Pancreas (tissue), 10 donors: ENCODE measurements at regions of chr10 and their contacts with region 1.

Region 1: DNA sequence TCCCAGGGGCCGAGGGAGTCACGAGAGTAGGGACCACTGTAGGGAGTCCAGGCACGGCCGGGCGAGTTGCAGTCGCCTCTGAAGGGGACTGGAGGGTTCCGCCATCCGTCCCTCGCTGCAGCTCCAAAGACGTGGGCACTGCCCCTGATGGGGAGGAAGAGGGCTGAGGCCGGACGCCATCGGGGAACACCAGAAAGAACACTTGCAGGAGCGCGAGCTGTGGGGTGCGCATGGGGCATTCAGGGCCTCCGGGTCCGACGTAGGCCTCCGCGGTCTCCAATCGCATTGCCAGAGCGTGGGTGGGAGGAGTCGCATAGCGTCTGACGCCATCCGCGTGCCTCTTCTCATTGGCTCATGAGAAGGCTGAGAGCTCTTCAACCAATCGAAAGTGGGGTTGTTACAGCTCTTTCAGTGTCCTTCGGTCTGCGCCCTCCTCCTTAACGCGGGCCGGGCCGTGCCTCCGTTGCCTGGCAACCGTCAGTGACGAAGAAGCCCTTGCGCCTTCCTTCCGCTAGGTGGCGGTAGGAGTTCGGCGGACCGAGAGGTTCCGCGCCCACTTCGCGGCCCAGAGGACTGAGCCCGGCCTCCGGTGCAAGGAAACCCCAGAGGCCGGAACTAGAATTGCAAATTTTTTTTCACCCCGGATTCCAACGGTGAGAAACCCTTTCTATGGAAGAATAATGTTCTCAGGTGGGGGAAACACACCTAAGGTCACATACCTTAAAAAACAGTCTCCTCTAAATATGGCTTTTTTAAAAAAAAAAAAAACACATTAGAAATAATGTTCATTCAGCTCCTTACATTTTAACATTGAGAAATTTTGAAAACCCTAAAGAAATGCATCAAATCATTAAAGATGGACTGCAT is at the start of gene TCTN3:
- DNase-seq: peak; percentile 95 to 99 (median 98)
- ATAC-seq: peak; percentile 99 to 100 (median 100)
- H3K4me3 ChIP-seq: peak within 1 kb of the TSS; percentile 69 to 77 (median 72)
- H3K27ac ChIP-seq: peak within 1 kb of the TSS; percentile 34 to 79 (median 47)
- H3K4me1 ChIP-seq: peaks cover 0 to 15% (median 0%) of the 10 kb centered on the region in 3 donors
- H3K27me3 ChIP-seq: no peaks in the 10 kb centered on the region
- CTCF ChIP-seq: peak; percentile 98 to 99 (median 99)
- total RNA-seq, gene TCTN3: 8.9 to 25.5 (median 16.7) TPM

Region 2: GRCh38 chr10:95605163-95605562 is 88.7 kb before region 1 on chr10:
- intact Hi-C with region 1: no loop called
- DNase-seq: no peak
- ATAC-seq: no peak
- H3K4me3 ChIP-seq: no peak overlapping the region
- H3K27ac ChIP-seq: no peak overlapping the region
- H3K4me1 ChIP-seq: no peaks in the 10 kb centered on the region
- H3K27me3 ChIP-seq: no peaks in the 10 kb centered on the region
- CTCF ChIP-seq: no peak

Region 3: GRCh38 chr10:95832216-95833041 is 138.5 kb after region 1 on chr10:
- intact Hi-C with region 1: loop called in 1 of 3 experiments (anchors 10 kb)
- DNase-seq: no peak
- ATAC-seq: peak in 1 of 4 donors; percentile 26
- H3K4me3 ChIP-seq: no peak overlapping the region
- H3K27ac ChIP-seq: no peak overlapping the region
- H3K4me1 ChIP-seq: no peaks in the 10 kb centered on the region
- H3K27me3 ChIP-seq: no peaks in the 10 kb centered on the region
- CTCF ChIP-seq: no peak